ENCODE measurements at regions of chr6 and their contacts with region 1.

Region 1: GRCh38 chr6:2634139-2634964 is 116.4 kb downstream of the MYLK4 start:
- DNase-seq: peak; percentile 84
- H3K4me3 Mint-ChIP-seq: peak overlapping the region; percentile 62
- H3K27ac Mint-ChIP-seq: no peak overlapping the region
- H3K4me1 Mint-ChIP-seq: peaks cover 5% of the 10 kb centered on the region
- H3K27me3 Mint-ChIP-seq: peaks cover 60% of the 10 kb centered on the region

Region 2: GRCh38 chr6:1596088-1596852 is 1038.1 kb before region 1 on chr6:
- CTCF ChIA-PET with region 1: interaction called, 15 read pairs
- DNase-seq: peak; percentile 74
- H3K4me3 Mint-ChIP-seq: no peak overlapping the region
- H3K27ac Mint-ChIP-seq: no peak overlapping the region
- H3K4me1 Mint-ChIP-seq: peaks cover 6% of the 10 kb centered on the region
- H3K27me3 Mint-ChIP-seq: peaks cover 92% of the 10 kb centered on the region

Region 3: GRCh38 chr6:2209226-2209809 is 425.0 kb before region 1 on chr6:
- CTCF ChIA-PET with region 1: interaction called, 19 read pairs
- DNase-seq: peak; percentile 61
- H3K4me3 Mint-ChIP-seq: no peak overlapping the region
- H3K27ac Mint-ChIP-seq: no peak overlapping the region
- H3K4me1 Mint-ChIP-seq: no peaks in the 10 kb centered on the region
- H3K27me3 Mint-ChIP-seq: no peaks in the 10 kb centered on the region

Region 4: DNA sequence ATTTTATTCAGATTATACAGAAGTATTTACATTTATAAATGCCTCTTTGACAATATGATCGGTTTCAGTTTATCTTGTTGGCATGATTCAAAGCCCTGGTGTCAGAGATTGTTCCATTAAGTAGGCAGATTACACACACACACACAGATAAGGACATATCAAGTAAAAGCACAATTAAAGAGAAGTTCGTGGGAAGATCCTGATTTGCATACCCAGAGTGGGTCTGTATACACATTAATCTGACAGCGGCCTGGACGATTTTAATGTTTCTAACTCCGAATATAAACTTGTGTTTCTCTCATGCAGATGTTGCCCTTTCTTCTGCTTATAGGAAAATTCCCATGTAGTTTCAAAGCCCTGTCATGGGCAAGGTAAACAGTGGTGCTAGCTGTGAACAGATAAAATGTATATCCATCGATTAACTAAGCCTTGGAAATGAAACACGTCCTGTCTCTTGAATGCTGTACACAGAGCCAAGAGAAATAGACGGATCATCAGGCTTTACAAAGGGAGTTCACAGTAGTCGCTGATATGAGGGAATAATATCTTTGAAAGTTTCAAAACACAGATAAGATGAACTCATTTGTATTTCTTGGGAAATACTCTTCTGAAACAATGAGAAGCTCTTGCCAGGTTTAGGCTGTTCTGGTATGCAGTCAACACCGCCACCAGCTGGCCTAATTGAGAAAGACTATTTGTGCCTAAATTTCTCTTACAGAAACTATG is 280.8 kb before region 1 on chr6:
- CTCF ChIA-PET with region 1: interaction called, 16 read pairs
- DNase-seq: peak; percentile 75
- H3K4me3 Mint-ChIP-seq: no peak overlapping the region
- H3K27ac Mint-ChIP-seq: no peak overlapping the region
- H3K4me1 Mint-ChIP-seq: no peaks in the 10 kb centered on the region
- H3K27me3 Mint-ChIP-seq: no peaks in the 10 kb centered on the region

Region 5: DNA sequence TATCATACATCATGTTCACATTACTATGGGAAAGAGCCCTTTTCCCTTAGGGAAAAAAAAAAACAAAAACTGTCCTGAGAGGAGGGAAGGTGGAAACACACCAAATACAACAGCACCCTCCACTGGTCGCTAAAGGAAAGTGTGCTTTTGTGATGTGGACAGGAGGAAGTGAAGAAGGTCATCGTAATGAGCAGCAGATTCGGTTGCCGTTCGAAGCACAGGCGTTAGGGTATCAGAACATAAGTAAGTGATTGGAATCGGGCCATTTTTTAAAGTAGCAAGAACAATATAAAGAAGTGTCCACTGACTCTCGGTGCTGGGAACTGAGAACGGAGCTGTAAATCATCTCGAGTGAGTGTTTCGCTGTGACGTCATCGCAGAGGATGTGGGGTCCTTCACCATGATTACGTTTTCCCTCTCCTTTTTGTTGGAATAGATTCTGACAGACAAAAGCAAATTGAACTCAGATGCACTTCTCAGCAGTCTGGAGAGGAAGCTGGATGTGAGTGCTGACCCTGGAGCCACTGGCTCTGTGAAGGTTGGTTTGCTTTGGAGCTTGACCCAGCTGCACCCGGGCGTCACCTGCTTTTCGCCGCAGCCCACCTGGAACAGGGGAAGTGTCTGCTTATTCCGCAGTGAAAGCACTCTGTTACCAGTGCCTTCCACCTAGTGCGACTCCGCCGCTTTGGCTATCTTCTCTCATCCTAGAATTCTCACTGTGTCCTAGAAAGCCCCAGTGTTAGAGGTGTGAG is 185.4 kb before region 1 on chr6:
- CTCF ChIA-PET with region 1: interaction called, 23 read pairs
- DNase-seq: peak; percentile 34
- H3K4me3 Mint-ChIP-seq: peak overlapping the region; percentile 2
- H3K27ac Mint-ChIP-seq: no peak overlapping the region
- H3K4me1 Mint-ChIP-seq: peaks cover 3% of the 10 kb centered on the region
- H3K27me3 Mint-ChIP-seq: peaks cover 4% of the 10 kb centered on the region

Region 6: DNA sequence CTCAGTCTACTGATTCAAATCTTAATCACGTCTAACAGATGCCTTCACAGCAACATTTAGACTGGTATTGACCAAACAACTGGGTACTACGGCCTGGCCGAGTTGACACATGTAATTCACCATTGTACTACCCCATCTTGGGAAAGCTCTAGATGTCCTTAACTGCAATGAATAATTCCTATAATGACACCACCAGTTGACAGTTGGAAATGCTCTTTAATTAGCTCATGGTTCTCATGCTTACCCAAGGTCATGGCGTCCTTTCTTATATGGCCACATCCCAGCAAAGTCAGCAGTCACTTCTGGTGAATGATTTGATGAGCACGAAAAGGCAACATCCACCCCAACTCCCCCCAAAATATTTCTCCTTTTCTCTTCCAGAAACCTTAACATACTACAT is 34.5 kb before region 1 on chr6:
- CTCF ChIA-PET with region 1: no interaction called
- DNase-seq: no peak
- H3K4me3 Mint-ChIP-seq: no peak overlapping the region
- H3K27ac Mint-ChIP-seq: no peak overlapping the region
- H3K4me1 Mint-ChIP-seq: no peaks in the 10 kb centered on the region
- H3K27me3 Mint-ChIP-seq: peaks cover 21% of the 10 kb centered on the region

Region 7: DNA sequence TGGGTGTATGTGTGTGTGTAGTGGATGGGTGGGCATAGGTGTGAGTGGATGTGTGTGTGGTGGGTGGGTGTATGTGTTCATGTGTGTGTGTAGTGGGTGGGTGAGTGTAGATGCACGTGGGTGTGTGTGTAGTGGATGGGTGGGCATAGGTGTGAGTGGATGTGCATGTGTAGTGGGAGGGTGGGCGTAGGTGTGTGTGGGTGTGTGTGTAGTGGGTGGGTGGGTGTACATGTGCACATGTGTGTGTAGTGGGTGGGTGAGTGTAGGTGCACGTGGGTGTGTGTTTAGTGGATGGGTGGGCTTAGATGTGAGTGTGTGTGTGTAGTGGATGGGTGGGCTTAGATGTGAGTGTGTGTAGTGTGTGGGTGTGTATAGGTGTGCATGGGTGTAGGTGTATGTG is 12.0 kb after region 1 on chr6:
- CTCF ChIA-PET with region 1: interaction called, 15 read pairs
- DNase-seq: no peak
- H3K4me3 Mint-ChIP-seq: no peak overlapping the region
- H3K27ac Mint-ChIP-seq: no peak overlapping the region
- H3K4me1 Mint-ChIP-seq: peaks cover 3% of the 10 kb centered on the region
- H3K27me3 Mint-ChIP-seq: peaks cover 32% of the 10 kb centered on the region

Region 8: DNA sequence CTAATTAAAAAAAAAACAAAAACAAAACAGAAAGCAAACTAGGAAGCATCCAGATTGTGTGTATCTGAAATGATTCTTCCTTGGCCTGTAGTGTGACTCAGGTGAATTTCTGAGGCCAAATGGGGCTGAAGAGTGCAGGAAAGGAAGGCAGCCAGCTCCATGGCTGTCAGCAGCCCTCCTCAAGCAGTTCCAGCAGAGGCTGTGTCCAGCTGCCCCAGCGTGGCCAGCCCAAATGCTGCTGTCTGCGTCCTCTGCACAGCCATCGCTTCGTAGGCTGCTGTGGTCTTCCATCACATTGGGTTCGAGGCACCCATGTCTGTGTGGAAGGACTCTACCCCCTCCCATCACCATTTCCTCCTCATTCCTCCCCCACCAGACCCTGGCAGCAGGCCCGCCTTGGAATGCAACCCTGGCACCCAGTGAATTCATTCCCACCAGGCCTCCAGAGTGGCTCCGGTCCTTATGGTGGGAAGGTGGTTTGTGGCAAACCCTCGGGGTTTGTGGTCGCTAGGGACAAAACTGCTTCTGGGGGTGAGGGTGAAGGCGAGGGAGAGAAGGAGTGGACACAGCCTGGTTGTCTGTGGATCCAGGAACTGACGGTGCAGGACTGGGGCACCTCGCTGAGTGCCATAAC is 34.8 kb after region 1 on chr6:
- CTCF ChIA-PET with region 1: no interaction called
- DNase-seq: no peak
- H3K4me3 Mint-ChIP-seq: no peak overlapping the region
- H3K27ac Mint-ChIP-seq: no peak overlapping the region
- H3K4me1 Mint-ChIP-seq: no peaks in the 10 kb centered on the region
- H3K27me3 Mint-ChIP-seq: no peaks in the 10 kb centered on the region

Region 9: GRCh38 chr6:2738373-2738979 is 104.1 kb after region 1 on chr6:
- CTCF ChIA-PET with region 1: no interaction called
- DNase-seq: peak; percentile 74
- H3K4me3 Mint-ChIP-seq: no peak overlapping the region
- H3K27ac Mint-ChIP-seq: no peak overlapping the region
- H3K4me1 Mint-ChIP-seq: no peaks in the 10 kb centered on the region
- H3K27me3 Mint-ChIP-seq: peaks cover 8% of the 10 kb centered on the region

Region 10: GRCh38 chr6:2876210-2877056 is 242.1 kb after region 1 on chr6:
- CTCF ChIA-PET with region 1: no interaction called
- DNase-seq: peak; percentile 41
- H3K4me3 Mint-ChIP-seq: peak overlapping the region; percentile 76
- H3K27ac Mint-ChIP-seq: peak overlapping the region; percentile 92
- H3K4me1 Mint-ChIP-seq: peaks cover 79% of the 10 kb centered on the region
- H3K27me3 Mint-ChIP-seq: peaks cover 4% of the 10 kb centered on the region